Breast epithelium (tissue), 4 donors: ENCODE measurements at regions of chr1 and their contacts with region 1.

Region 1: DNA sequence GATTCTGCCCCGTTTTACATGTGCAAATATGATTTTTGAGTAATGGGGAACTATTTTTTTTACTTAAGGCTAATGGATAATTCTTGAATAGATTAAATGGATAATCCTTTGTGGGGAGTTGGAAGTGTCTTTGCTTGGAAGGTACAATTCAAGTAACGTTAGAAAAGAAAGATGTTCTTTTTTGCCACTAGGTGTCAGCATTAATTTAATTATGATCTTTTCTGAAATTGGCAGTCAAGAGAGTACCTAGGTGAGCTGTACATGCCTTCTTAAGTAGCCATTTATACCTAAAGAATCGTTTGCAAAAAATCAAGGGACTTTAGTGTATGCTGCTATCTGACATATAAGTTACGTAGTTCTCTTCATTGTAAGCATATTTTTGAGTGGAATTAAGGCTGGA is 2.2 kb downstream of the FBXO28 start:
- DNase-seq: no peak
- H3K4me3 ChIP-seq: no peak overlapping the region
- H3K27ac ChIP-seq: no peak overlapping the region
- H3K4me1 ChIP-seq: no peaks in the 10 kb centered on the region
- H3K27me3 ChIP-seq: no peaks in the 10 kb centered on the region
- CTCF ChIP-seq: peak; percentile 60 to 71 (median 63)
- POLR2A ChIP-seq: no peak

Region 2: GRCh38 chr1:224292419-224292818 is 176.3 kb after region 1 on chr1:
- intact Hi-C with region 1: loop called (anchors 2 kb)
- DNase-seq: no peak
- H3K4me3 ChIP-seq: no peak overlapping the region
- H3K27ac ChIP-seq: no peak overlapping the region
- H3K4me1 ChIP-seq: no peaks in the 10 kb centered on the region
- H3K27me3 ChIP-seq: no peaks in the 10 kb centered on the region
- CTCF ChIP-seq: no peak
- POLR2A ChIP-seq: no peak